Endothelial cell of umbilical vein (primary cell): ENCODE measurements at regions of chr17 and their contacts with region 1.

Region 1: DNA sequence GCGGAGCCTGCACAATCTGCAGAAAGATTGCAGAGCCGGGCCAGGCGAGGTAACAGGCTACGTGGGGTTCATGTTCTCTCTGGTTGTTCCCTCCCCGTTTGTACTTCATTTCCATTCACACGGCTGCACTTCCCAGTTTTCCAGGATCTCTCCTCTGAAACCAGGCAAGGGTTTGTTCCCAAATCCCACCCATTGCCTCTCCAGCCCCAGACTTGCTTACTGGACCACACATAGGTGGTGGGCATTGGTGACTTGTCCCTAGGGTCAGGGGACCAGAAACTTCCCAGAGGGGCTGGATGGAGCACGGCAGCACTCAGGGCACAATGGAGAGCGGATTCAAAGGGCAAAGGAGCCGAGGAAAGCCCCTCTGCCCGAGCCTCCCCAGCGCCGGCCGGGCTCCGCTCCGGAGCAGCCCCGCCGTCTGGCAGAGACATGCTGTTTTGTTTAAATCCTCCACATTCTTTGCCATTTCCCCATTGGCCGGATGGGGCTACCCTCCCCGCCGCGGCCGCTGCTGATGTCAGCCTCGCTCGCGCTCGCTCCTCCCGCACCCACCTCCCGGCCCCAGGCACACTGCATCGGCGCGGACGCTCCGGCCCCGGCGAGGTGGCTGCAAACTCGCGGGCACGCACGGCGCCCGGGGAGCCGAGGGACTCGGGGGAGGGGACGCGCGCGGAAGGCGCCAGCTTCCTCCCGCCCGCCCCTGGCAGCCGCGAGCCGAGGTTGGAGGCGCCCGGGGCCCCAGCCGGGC is at the start of gene PITPNC1:
- DNase-seq: peak; percentile 89
- H3K4me3 ChIP-seq: peak within 1 kb of the TSS; percentile 56 to 87 (median 85)
- H3K27ac ChIP-seq: peak within 1 kb of the TSS; percentile 82
- H3K4me1 ChIP-seq: peaks cover 14% of the 10 kb centered on the region
- H3K27me3 ChIP-seq: no peaks in the 10 kb centered on the region
- CTCF ChIP-seq: no peak
- POLR2A ChIP-seq: peak; percentile 23
- total RNA-seq, gene PITPNC1: 9.6 and 10.5 TPM in 2 replicates

Region 2: GRCh38 chr17:67366193-67367157 is 10.4 kb before region 1 on chr17 and contains the start of gene PSMD12:
- CTCF ChIA-PET with region 1: interaction called, 16 read pairs
- POLR2A ChIA-PET with region 1: interaction called, 8 read pairs
- dilution Hi-C with region 1: no loop called
- intact Hi-C with region 1: no loop called
- DNase-seq: peak; percentile 92
- H3K4me3 ChIP-seq: peak within 1 kb of the TSS; percentile 60 to 93 (median 64)
- H3K27ac ChIP-seq: peak within 1 kb of the TSS; percentile 80
- H3K4me1 ChIP-seq: peaks cover 14% of the 10 kb centered on the region
- H3K27me3 ChIP-seq: no peaks in the 10 kb centered on the region
- CTCF ChIP-seq: no peak
- POLR2A ChIP-seq: peak; percentile 76
- total RNA-seq, gene PSMD12: 69.8 and 73.0 TPM in 2 replicates

Region 3: GRCh38 chr17:67441052-67441927 is 64.4 kb after region 1 on chr17:
- CTCF ChIA-PET with region 1: interaction called, 9 read pairs
- POLR2A ChIA-PET with region 1: no interaction called
- dilution Hi-C with region 1: no loop called
- intact Hi-C with region 1: loop called (anchors 1 kb)
- DNase-seq: peak; percentile 64
- H3K4me3 ChIP-seq: no peak overlapping the region
- H3K27ac ChIP-seq: peak overlapping the region; percentile 15
- H3K4me1 ChIP-seq: peaks cover 23% of the 10 kb centered on the region
- H3K27me3 ChIP-seq: no peaks in the 10 kb centered on the region
- CTCF ChIP-seq: no peak
- POLR2A ChIP-seq: no peak

Region 4: GRCh38 chr17:67528751-67529436 is 152.0 kb after region 1 on chr17:
- CTCF ChIA-PET with region 1: interaction called, 3 read pairs
- POLR2A ChIA-PET with region 1: no interaction called
- dilution Hi-C with region 1: no loop called
- intact Hi-C with region 1: loop called (anchors 1 kb)
- DNase-seq: peak; percentile 94
- H3K4me3 ChIP-seq: peak overlapping the region in 2 of 3 experiments; percentile 9 to 38
- H3K27ac ChIP-seq: peak overlapping the region; percentile 88
- H3K4me1 ChIP-seq: peaks cover 11% of the 10 kb centered on the region
- H3K27me3 ChIP-seq: no peaks in the 10 kb centered on the region
- CTCF ChIP-seq: no peak
- POLR2A ChIP-seq: no peak

Region 5: GRCh38 chr17:67629971-67630320 is 253.0 kb after region 1 on chr17:
- CTCF ChIA-PET with region 1: interaction called, 18 read pairs
- POLR2A ChIA-PET with region 1: no interaction called
- dilution Hi-C with region 1: no loop called
- intact Hi-C with region 1: loop called (anchors 1 kb)
- DNase-seq: peak; percentile 33
- H3K4me3 ChIP-seq: no peak overlapping the region
- H3K27ac ChIP-seq: no peak overlapping the region
- H3K4me1 ChIP-seq: peaks cover 13% of the 10 kb centered on the region
- H3K27me3 ChIP-seq: no peaks in the 10 kb centered on the region
- CTCF ChIP-seq: peak in 1 of 2 donors; percentile 28
- POLR2A ChIP-seq: no peak

Region 6: DNA sequence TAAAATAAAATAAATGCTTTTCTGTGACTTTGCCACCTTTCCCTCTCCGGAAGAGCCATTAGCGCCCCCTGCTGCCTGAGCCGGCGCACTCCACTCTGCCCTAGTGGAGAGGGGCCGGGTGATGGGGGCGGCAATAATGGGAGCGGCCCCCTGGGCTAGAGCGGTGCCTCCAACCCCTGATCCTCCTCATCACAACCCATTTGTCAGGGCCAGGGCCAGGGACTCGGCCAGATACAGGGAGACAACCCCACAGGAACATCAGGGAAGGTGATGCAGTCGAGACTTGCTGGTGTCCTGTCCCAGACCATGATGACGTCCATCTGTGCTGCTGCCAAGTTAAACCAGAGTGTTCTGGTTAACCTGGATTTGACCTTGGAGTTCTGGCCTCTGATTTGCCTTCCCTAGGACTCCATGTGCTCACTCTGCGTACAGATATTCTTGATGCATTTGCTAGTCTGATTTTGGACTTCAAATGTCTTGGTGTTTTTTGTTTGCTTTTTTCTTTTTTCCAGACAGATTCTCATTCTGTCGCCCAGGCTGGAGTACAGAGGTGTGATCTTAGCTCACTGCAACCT is 402.3 kb after region 1 on chr17:
- CTCF ChIA-PET with region 1: no interaction called
- POLR2A ChIA-PET with region 1: no interaction called
- dilution Hi-C with region 1: no loop called
- intact Hi-C with region 1: loop called (anchors 5 kb)
- DNase-seq: peak; percentile 33
- H3K4me3 ChIP-seq: no peak overlapping the region
- H3K27ac ChIP-seq: no peak overlapping the region
- H3K4me1 ChIP-seq: peaks cover 3% of the 10 kb centered on the region
- H3K27me3 ChIP-seq: no peaks in the 10 kb centered on the region
- CTCF ChIP-seq: peak; percentile 66 to 73
- POLR2A ChIP-seq: no peak